Left cardiac atrium (tissue), 4 donors: ENCODE measurements at regions of chr19 and their contacts with region 1.

Region 1: DNA sequence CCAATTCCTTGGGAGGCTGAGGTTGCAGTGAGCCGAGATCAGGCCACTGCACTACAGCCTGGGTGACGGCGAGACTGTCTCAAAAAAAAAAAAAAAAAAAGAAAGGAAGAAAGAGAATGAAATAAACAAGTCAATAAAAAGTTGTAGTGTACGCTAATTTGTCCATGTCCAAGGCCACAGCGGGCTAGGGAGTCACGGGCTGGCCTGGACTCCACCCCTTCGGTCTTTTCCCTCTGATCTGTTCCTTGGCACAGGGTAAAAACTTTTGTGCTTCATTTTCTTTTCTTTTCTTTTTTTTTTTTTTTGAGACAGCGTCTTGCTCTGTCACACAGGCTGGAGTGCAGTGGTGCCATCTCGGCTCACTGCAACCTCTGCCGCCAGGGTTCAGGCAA is 19.4 kb upstream of the MKNK2 start:
- DNase-seq: no peak
- ATAC-seq: peak in 1 of 2 donors; percentile 20

Region 2: DNA sequence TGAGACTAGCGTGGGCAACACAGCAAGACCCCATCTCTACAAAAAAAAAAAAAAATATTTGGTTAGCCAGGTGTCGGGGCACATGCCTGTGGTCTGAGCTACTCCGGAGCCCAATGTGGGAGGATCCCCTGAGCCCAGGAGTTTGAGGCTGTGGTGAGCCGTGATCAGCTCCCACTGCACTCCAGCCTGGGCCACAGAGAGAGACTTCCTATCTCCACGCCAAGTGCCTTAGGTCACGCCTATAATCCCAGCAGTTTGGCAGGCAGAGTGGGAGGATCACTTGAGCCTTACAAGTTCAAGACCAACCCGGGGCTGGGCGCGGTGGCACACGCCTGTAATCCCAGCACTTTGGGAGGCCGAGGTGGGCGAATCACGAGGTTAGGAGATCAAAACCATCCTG is 173.9 kb before region 1 on chr19:
- intact Hi-C with region 1: no loop called
- DNase-seq: no peak
- ATAC-seq: no peak

Region 3: GRCh38 chr19:1929021-1929742 is 141.2 kb before region 1 on chr19:
- intact Hi-C with region 1: loop called (anchors 10 kb)
- DNase-seq: peak; percentile 84
- ATAC-seq: peak; percentile 91 to 93